Naive thymus-derived CD8-positive, alpha-beta T cell (primary cell): ENCODE measurements at regions of chr10 and their contacts with region 1.

Region 1: DNA sequence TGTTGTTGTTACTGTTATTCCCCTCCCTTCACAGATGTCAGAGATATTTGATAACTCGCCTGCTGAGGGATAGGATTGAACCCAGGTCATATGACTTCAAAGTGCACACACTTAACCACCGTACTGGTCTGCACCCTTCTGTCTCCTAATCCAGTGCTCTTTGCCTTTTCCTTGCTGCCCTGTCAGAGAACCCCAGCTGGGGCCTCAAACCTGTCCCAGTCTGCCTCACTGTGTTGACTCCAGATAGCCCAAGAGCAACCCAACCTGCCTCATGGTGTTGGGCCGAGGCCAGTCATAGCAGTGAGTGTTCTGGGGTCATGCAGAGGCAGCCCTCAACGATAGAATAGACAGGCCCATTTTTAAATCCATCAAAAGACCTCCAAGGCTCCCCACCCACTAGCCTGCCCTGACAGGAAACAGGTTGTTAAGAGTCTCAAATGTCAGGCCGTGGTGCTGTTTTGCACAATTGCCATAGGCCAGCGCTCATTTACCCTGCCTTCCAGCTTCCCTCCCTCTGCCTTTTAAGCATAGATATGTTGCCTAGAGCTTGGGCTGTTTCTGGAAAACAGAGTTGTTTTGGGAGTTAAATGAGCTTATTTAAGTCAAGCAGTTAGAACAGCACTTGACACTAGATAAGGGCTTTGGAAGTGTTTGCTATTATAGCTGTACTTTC is 37.0 kb upstream of the PDCD4 start:
- DNase-seq: peak in 9 of 10 donors; percentile 29 to 86 (median 66)
- ATAC-seq: peak; percentile 92 to 94
- H3K4me3 Mint-ChIP-seq: peak overlapping the region; percentile 46 to 83 (median 67)
- H3K27ac Mint-ChIP-seq: peak overlapping the region; percentile 98 to 100 (median 98)
- H3K4me1 Mint-ChIP-seq: peaks cover 27 to 57% (median 52%) of the 10 kb centered on the region in 4 donors
- H3K27me3 Mint-ChIP-seq: no peaks in the 10 kb centered on the region

Region 2: GRCh38 chr10:110852255-110852896 is 17.6 kb after region 1 on chr10:
- POLR2A ChIA-PET with region 1: interaction called, 75 read pairs
- DNase-seq: no peak
- ATAC-seq: peak; percentile 22 to 42
- H3K4me3 Mint-ChIP-seq: peak overlapping the region; percentile 2 to 75 (median 58)
- H3K27ac Mint-ChIP-seq: peak overlapping the region; percentile 60 to 87 (median 73)
- H3K4me1 Mint-ChIP-seq: peaks cover 34 to 83% (median 76%) of the 10 kb centered on the region in 4 donors
- H3K27me3 Mint-ChIP-seq: no peaks in the 10 kb centered on the region

Region 3: GRCh38 chr10:110857265-110858158 is 22.7 kb after region 1 on chr10:
- POLR2A ChIA-PET with region 1: interaction called, 75 read pairs
- DNase-seq: no peak
- ATAC-seq: no peak
- H3K4me3 Mint-ChIP-seq: peak overlapping the region in 8 of 10 donors; percentile 37 to 67 (median 45)
- H3K27ac Mint-ChIP-seq: peak overlapping the region; percentile 49 to 100 (median 98)
- H3K4me1 Mint-ChIP-seq: peaks cover 39 to 90% (median 86%) of the 10 kb centered on the region in 4 donors
- H3K27me3 Mint-ChIP-seq: no peaks in the 10 kb centered on the region

Region 4: GRCh38 chr10:110864662-110865140 is 29.9 kb after region 1 on chr10:
- POLR2A ChIA-PET with region 1: interaction called, 75 read pairs
- DNase-seq: peak in 9 of 10 donors; percentile 48 to 90 (median 80)
- ATAC-seq: peak; percentile 65 to 73
- H3K4me3 Mint-ChIP-seq: peak overlapping the region; percentile 62 to 94 (median 82)
- H3K27ac Mint-ChIP-seq: peak overlapping the region; percentile 97 to 100 (median 99)
- H3K4me1 Mint-ChIP-seq: peaks cover 60 to 100% (median 98%) of the 10 kb centered on the region in 4 donors
- H3K27me3 Mint-ChIP-seq: no peaks in the 10 kb centered on the region

Region 5: DNA sequence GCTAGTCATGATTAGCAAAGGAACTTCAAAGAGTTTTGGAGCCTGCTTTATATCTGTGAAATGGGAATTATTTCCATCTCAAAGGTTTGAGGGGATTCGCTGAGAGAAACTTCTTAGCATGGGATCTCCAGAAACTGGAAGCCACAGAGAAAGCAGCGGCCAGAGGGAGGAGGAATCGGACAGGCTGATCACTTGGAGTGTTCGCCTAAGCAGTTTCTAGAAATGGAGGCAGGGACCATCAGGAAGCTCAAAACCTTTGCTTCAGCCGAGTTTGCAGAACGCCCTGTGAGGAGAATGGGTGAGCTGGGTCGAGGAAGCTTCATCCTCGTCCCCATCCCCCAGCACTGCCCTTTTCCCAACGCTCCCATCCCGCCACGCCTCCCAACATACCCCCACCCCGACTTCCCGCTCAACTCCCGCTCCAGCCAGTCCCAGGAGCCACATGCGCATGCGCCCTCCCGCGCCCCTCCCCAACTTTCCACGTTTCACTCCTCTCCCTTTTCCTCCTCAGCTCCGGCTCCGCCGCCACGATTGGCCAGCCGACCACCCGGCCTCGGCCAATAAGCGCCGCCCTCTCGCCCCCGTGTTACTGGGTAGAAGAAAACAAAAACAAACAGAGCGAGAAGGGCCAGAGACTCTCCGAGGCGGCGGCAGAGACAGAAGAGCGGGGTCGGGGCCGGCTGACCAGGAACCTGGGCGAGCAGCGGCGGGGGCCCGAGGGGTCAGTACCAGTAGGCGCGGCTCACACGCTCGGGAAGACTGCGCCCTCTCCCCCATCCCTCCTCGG is 36.7 kb after region 1 on chr10 and contains the start of gene PDCD4:
- POLR2A ChIA-PET with region 1: interaction called, 40 read pairs
- DNase-seq: peak; percentile 90 to 95 (median 92)
- ATAC-seq: peak; percentile 60 to 67
- H3K4me3 Mint-ChIP-seq: peak within 1 kb of the TSS; percentile 79 to 99 (median 96)
- H3K27ac Mint-ChIP-seq: peak within 1 kb of the TSS; percentile 97 to 100 (median 99)
- H3K4me1 Mint-ChIP-seq: peaks cover 34 to 81% (median 65%) of the 10 kb centered on the region in 4 donors
- H3K27me3 Mint-ChIP-seq: no peaks in the 10 kb centered on the region
- polyA plus RNA-seq, gene PDCD4: 318 to 385 (median 341) TPM

Region 6: DNA sequence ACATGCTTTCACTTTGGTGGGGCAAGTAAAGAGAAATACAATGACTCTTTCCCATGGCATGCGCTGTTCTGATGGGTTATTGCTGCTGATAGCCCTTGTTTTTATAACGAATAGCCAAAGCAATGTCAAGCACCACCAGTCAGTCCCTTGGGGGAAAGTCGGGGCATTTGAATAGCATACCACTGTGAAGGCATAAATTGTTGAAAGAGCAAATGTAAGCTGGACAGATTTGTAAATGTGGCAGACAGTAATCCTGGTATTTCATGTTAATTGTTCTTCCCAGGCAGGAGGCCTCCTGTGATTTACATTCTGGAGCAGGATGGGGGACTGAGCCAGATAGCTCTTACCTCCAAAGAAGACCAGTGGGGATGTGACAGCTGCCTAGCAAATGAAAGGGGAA is 535.3 kb after region 1 on chr10:
- POLR2A ChIA-PET with region 1: no interaction called
- DNase-seq: no peak
- ATAC-seq: no peak
- H3K4me3 Mint-ChIP-seq: no peak overlapping the region
- H3K27ac Mint-ChIP-seq: no peak overlapping the region
- H3K4me1 Mint-ChIP-seq: no peaks in the 10 kb centered on the region
- H3K27me3 Mint-ChIP-seq: peaks cover 1 to 45% (median 12%) of the 10 kb centered on the region in 5 donors